ENCODE measurements at regions of chr16 and their contacts with region 1.

Region 1: GRCh38 chr16:2251483-2252240 is at the start of gene ECI1:
- DNase-seq: peak; percentile 87
- ATAC-seq: peak; percentile 91
- H3K4me3 Mint-ChIP-seq: peak within 1 kb of the TSS; percentile 88
- H3K27ac Mint-ChIP-seq: peak within 1 kb of the TSS; percentile 91
- H3K4me1 Mint-ChIP-seq: peaks cover 14% of the 10 kb centered on the region
- H3K27me3 Mint-ChIP-seq: no peaks in the 10 kb centered on the region
- CTCF ChIP-seq: peak; percentile 41
- total RNA-seq, gene ECI1: 37.4 to 40.5 TPM

Region 2: DNA sequence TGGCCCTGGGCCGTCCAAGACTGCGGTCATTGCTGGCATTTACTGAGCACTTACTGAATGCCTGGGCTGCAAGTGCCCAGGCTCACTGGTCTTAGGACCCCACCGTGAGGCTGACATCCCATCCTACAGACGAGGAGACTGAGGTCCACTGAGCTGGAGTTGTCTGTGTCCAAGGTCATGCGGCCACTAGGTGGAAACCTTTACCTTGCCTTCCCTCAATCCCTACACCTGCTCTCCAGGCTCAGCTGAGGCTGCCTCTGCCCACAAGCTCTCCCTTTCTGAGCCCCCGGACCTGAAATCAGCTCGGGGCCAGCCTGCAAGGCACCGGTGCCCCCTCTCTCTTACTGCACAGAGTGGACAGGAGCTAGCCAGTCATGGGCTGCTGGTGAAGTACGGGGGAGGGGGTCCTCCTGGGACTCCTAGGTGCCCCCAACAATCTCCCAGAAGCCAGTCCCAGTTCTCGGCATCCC is 56.8 kb before region 1 on chr16:
- CTCF ChIA-PET with region 1: interaction called, 24 read pairs
- POLR2A ChIA-PET with region 1: interaction called, 3 read pairs
- intact Hi-C with region 1: no loop called
- DNase-seq: peak; percentile 75
- ATAC-seq: peak; percentile 77
- H3K4me3 Mint-ChIP-seq: peak overlapping the region; percentile 55
- H3K27ac Mint-ChIP-seq: no peak overlapping the region
- H3K4me1 Mint-ChIP-seq: peaks cover 3% of the 10 kb centered on the region
- H3K27me3 Mint-ChIP-seq: peaks cover 23% of the 10 kb centered on the region
- CTCF ChIP-seq: peak; percentile 63

Region 3: GRCh38 chr16:2231016-2231931 is 20.4 kb before region 1 on chr16:
- CTCF ChIA-PET with region 1: interaction called, 9 read pairs
- POLR2A ChIA-PET with region 1: interaction called, 19 read pairs
- intact Hi-C with region 1: no loop called
- DNase-seq: no peak
- ATAC-seq: no peak
- H3K4me3 Mint-ChIP-seq: no peak overlapping the region
- H3K27ac Mint-ChIP-seq: no peak overlapping the region
- H3K4me1 Mint-ChIP-seq: peaks cover 2% of the 10 kb centered on the region
- H3K27me3 Mint-ChIP-seq: no peaks in the 10 kb centered on the region
- CTCF ChIP-seq: no peak

Region 4: GRCh38 chr16:2236337-2237101 is 15.1 kb before region 1 on chr16 and contains the start of gene DNASE1L2:
- CTCF ChIA-PET with region 1: no interaction called
- POLR2A ChIA-PET with region 1: interaction called, 19 read pairs
- intact Hi-C with region 1: no loop called
- DNase-seq: no peak
- ATAC-seq: peak; percentile 17
- H3K4me3 Mint-ChIP-seq: no peak within 1 kb of the TSS
- H3K27ac Mint-ChIP-seq: no peak within 1 kb of the TSS
- H3K4me1 Mint-ChIP-seq: peaks cover 2% of the 10 kb centered on the region
- H3K27me3 Mint-ChIP-seq: no peaks in the 10 kb centered on the region
- CTCF ChIP-seq: no peak
- total RNA-seq, gene DNASE1L2: 0.32 to 0.51 TPM

Region 5: GRCh38 chr16:2267913-2268666 is 16.4 kb after region 1 on chr16 and contains the start of gene RNPS1:
- CTCF ChIA-PET with region 1: interaction called, 10 read pairs
- POLR2A ChIA-PET with region 1: interaction called, 59 read pairs
- intact Hi-C with region 1: no loop called
- DNase-seq: peak; percentile 97
- ATAC-seq: peak; percentile 91
- H3K4me3 Mint-ChIP-seq: peak within 1 kb of the TSS; percentile 76
- H3K27ac Mint-ChIP-seq: peak within 1 kb of the TSS; percentile 97
- H3K4me1 Mint-ChIP-seq: peaks cover 38% of the 10 kb centered on the region
- H3K27me3 Mint-ChIP-seq: no peaks in the 10 kb centered on the region
- CTCF ChIP-seq: no peak
- total RNA-seq, gene RNPS1: 334 to 358 TPM